ENCODE measurements at regions of chr6 and their contacts with region 1.

Region 1: DNA sequence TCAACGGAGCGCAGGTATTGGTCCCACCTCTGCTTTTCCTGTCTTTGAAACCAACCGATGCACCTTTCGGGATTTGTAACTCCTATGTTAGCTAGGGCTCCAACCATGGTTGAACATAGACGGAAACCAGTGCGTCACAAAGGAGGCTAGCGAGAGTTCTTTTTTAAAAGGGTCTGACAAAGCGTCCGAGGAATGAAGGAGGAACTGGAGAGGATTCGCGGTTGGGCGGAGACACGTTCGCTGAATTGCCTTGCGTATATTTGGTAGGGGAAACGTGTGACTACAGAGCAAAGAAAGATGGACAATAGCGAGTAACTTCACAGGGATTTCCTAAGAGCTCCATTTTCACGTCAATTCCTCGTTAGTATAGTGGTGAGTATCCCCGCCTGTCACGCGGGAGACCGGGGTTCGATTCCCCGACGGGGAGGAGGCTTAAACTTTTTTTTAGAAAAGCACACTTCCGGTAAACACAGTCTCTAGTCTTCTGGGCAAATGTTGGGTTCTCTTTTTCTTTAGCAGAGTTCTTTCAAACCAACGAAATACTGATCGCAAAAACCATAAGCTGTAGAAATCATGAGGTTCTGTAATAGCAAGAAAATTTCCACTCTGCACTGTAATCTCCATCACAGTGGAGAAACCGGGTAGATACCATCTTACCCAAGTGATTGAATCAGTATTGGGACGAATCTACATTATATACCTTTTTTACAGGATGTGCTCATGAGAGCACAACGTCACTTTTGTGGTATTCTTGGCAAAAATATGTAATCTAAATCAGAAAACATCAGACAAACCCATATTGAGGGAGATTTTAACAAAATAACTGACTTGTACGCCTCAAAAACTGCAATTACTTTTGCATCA is 6.6 kb upstream of the ZNF184 start:
- DNase-seq: peak; percentile 83 to 97 (median 87)
- ATAC-seq: peak; percentile 69
- H3K4me3 ChIP-seq: peak overlapping the region; percentile 79 to 96
- H3K4me3 Mint-ChIP-seq: no peak overlapping the region
- H3K27ac ChIP-seq: peak overlapping the region; percentile 96 to 99
- H3K27ac Mint-ChIP-seq: no peak overlapping the region
- H3K4me1 ChIP-seq: peaks cover 13% of the 10 kb centered on the region
- H3K4me1 Mint-ChIP-seq: peaks cover 9% of the 10 kb centered on the region
- H3K27me3 ChIP-seq: no peaks in the 10 kb centered on the region
- H3K27me3 Mint-ChIP-seq: no peaks in the 10 kb centered on the region
- CTCF ChIP-seq: no peak

Region 2: GRCh38 chr6:26329763-26330511 is 1149.6 kb before region 1 on chr6:
- CTCF ChIA-PET with region 1: no interaction called
- POLR2A ChIA-PET with region 1: no interaction called
- intact Hi-C with region 1: loop called in 1 of 2 experiments (anchors 5 kb)
- DNase-seq: peak in 7 of 9 experiments; percentile 35 to 81 (median 60)
- ATAC-seq: peak; percentile 27
- H3K4me3 ChIP-seq: no peak overlapping the region
- H3K4me3 Mint-ChIP-seq: peak overlapping the region; percentile 59
- H3K27ac ChIP-seq: no peak overlapping the region
- H3K27ac Mint-ChIP-seq: peak overlapping the region; percentile 85
- H3K4me1 ChIP-seq: peaks cover 18% of the 10 kb centered on the region
- H3K4me1 Mint-ChIP-seq: peaks cover 53% of the 10 kb centered on the region
- H3K27me3 ChIP-seq: peaks cover 8 to 11% of the 10 kb centered on the region in 2 experiments
- H3K27me3 Mint-ChIP-seq: peaks cover 27% of the 10 kb centered on the region
- CTCF ChIP-seq: no peak

Region 3: DNA sequence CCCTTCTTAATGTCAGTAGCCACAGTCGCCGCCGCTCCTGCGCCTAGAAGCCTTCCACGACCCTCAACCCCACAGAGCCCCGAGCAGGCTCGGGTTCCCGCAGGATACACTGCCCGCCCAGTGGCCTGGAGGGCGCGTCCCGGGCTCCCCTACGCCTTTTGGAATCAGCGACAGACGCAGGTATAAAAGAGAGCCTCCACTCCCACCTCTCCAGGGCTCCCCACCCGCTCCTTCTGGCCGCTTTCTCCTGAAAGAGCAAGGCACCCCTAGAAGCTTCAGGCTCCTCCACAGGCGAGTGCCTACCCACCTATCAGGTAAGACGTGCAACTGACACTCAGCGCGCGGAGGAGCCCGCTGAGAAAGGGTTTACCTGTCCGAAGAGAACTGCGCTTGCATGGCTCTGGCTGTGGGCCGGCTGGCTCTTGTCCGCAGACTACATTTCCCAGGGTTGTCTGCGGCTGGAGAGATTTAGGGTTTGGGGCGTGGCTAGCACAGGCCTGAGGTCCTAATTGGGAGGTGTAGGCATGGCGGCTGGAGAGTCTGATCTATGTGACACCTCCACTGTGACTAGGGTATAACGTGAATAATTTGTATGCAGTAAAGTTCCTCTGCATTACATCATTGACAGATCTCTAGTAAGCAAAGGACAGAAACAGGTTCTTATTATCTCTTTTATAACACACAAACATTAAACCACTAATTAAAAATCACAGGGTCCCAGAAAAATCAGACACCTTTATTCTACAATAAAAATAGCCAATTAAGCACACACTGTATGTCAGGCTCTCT is 104.5 kb before region 1 on chr6:
- CTCF ChIA-PET with region 1: no interaction called
- POLR2A ChIA-PET with region 1: interaction called, 4 read pairs
- intact Hi-C with region 1: loop called in 1 of 2 experiments (anchors 1 kb)
- DNase-seq: peak; percentile 43 to 85 (median 69)
- ATAC-seq: peak; percentile 98
- H3K4me3 ChIP-seq: peak overlapping the region; percentile 58 to 68
- H3K4me3 Mint-ChIP-seq: peak overlapping the region; percentile 96
- H3K27ac ChIP-seq: peak overlapping the region; percentile 13 to 48
- H3K27ac Mint-ChIP-seq: peak overlapping the region; percentile 92
- H3K4me1 ChIP-seq: peaks cover 12% of the 10 kb centered on the region
- H3K4me1 Mint-ChIP-seq: peaks cover 21% of the 10 kb centered on the region
- H3K27me3 ChIP-seq: no peaks in the 10 kb centered on the region
- H3K27me3 Mint-ChIP-seq: peaks cover 8% of the 10 kb centered on the region
- CTCF ChIP-seq: no peak

Region 4: GRCh38 chr6:27400877-27401642 is 78.5 kb before region 1 on chr6:
- CTCF ChIA-PET with region 1: no interaction called
- POLR2A ChIA-PET with region 1: no interaction called
- intact Hi-C with region 1: no loop called
- DNase-seq: no peak
- ATAC-seq: no peak
- H3K4me3 ChIP-seq: no peak overlapping the region
- H3K4me3 Mint-ChIP-seq: no peak overlapping the region
- H3K27ac ChIP-seq: no peak overlapping the region
- H3K27ac Mint-ChIP-seq: no peak overlapping the region
- H3K4me1 ChIP-seq: no peaks in the 10 kb centered on the region
- H3K4me1 Mint-ChIP-seq: no peaks in the 10 kb centered on the region
- H3K27me3 ChIP-seq: no peaks in the 10 kb centered on the region
- H3K27me3 Mint-ChIP-seq: no peaks in the 10 kb centered on the region
- CTCF ChIP-seq: no peak

Region 5: GRCh38 chr6:27518881-27519795 is 39.6 kb after region 1 on chr6:
- CTCF ChIA-PET with region 1: interaction called, 11 read pairs
- POLR2A ChIA-PET with region 1: interaction called, 11 read pairs
- intact Hi-C with region 1: loop called in 1 of 2 experiments (anchors 2 kb)
- DNase-seq: peak; percentile 29 to 88 (median 61)
- ATAC-seq: peak; percentile 78
- H3K4me3 ChIP-seq: peak overlapping the region; percentile 74 to 88
- H3K4me3 Mint-ChIP-seq: peak overlapping the region; percentile 83
- H3K27ac ChIP-seq: peak overlapping the region; percentile 59 to 72
- H3K27ac Mint-ChIP-seq: peak overlapping the region; percentile 83
- H3K4me1 ChIP-seq: peaks cover 10% of the 10 kb centered on the region
- H3K4me1 Mint-ChIP-seq: peaks cover 19% of the 10 kb centered on the region
- H3K27me3 ChIP-seq: peaks cover 0 to 9% of the 10 kb centered on the region in 2 experiments
- H3K27me3 Mint-ChIP-seq: peaks cover 18% of the 10 kb centered on the region
- CTCF ChIP-seq: peak; percentile 77

Region 6: DNA sequence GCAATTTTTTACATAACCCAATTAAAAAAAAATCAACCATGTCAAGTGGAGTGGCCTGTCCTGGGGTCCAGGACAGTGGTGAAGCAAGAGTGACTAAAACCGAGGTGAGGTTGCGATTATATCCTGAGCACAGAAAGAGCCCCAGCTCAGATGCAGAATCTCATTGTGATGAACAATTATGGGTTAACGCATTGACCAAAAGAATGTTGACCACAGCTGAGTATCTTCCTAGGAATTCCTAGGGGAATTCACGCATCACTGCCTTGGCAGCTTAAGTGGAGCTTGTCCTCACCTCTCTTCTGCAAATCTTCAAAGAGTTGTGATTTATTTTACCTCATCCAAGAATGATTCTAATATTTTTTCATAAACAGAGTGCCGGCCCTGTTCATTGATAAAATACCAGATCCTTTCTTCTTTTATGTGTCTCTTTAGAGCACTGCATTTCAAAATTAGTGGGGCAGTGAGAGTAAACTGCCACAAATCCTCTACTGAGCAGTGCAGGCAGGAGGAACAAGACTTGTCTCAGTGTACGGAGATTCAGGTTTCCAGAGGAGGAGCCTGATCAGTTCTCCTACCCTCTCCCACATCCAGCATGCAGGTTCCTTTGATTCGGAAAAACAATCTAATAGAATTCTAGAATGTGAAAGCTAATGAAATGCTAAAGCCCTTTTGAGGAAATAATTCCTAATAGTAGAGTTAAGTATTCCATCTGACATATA is 53.4 kb after region 1 on chr6:
- CTCF ChIA-PET with region 1: no interaction called
- POLR2A ChIA-PET with region 1: no interaction called
- intact Hi-C with region 1: no loop called
- DNase-seq: no peak
- ATAC-seq: no peak
- H3K4me3 ChIP-seq: no peak overlapping the region
- H3K4me3 Mint-ChIP-seq: no peak overlapping the region
- H3K27ac ChIP-seq: no peak overlapping the region
- H3K27ac Mint-ChIP-seq: no peak overlapping the region
- H3K4me1 ChIP-seq: no peaks in the 10 kb centered on the region
- H3K4me1 Mint-ChIP-seq: no peaks in the 10 kb centered on the region
- H3K27me3 ChIP-seq: peaks cover 0 to 6% of the 10 kb centered on the region in 2 experiments
- H3K27me3 Mint-ChIP-seq: peaks cover 67% of the 10 kb centered on the region
- CTCF ChIP-seq: no peak

Region 7: GRCh38 chr6:27545271-27546046 is 65.9 kb after region 1 on chr6:
- CTCF ChIA-PET with region 1: no interaction called
- POLR2A ChIA-PET with region 1: no interaction called
- intact Hi-C with region 1: no loop called
- DNase-seq: peak in 1 of 9 experiments; percentile 23
- ATAC-seq: no peak
- H3K4me3 ChIP-seq: no peak overlapping the region
- H3K4me3 Mint-ChIP-seq: no peak overlapping the region
- H3K27ac ChIP-seq: no peak overlapping the region
- H3K27ac Mint-ChIP-seq: no peak overlapping the region
- H3K4me1 ChIP-seq: no peaks in the 10 kb centered on the region
- H3K4me1 Mint-ChIP-seq: peaks cover 15% of the 10 kb centered on the region
- H3K27me3 ChIP-seq: peaks cover 34 to 52% of the 10 kb centered on the region in 2 experiments
- H3K27me3 Mint-ChIP-seq: peaks cover 88% of the 10 kb centered on the region
- CTCF ChIP-seq: no peak

Region 8: GRCh38 chr6:27864906-27865849 is 385.6 kb after region 1 on chr6:
- CTCF ChIA-PET with region 1: no interaction called
- POLR2A ChIA-PET with region 1: interaction called, 13 read pairs
- intact Hi-C with region 1: no loop called
- DNase-seq: peak; percentile 37 to 97 (median 56)
- ATAC-seq: peak; percentile 83
- H3K4me3 ChIP-seq: peak overlapping the region; percentile 71 to 79
- H3K4me3 Mint-ChIP-seq: peak overlapping the region; percentile 95
- H3K27ac ChIP-seq: peak overlapping the region; percentile 67 to 83
- H3K27ac Mint-ChIP-seq: peak overlapping the region; percentile 94
- H3K4me1 ChIP-seq: peaks cover 17% of the 10 kb centered on the region
- H3K4me1 Mint-ChIP-seq: peaks cover 38% of the 10 kb centered on the region
- H3K27me3 ChIP-seq: no peaks in the 10 kb centered on the region
- H3K27me3 Mint-ChIP-seq: no peaks in the 10 kb centered on the region
- CTCF ChIP-seq: no peak

Region 9: DNA sequence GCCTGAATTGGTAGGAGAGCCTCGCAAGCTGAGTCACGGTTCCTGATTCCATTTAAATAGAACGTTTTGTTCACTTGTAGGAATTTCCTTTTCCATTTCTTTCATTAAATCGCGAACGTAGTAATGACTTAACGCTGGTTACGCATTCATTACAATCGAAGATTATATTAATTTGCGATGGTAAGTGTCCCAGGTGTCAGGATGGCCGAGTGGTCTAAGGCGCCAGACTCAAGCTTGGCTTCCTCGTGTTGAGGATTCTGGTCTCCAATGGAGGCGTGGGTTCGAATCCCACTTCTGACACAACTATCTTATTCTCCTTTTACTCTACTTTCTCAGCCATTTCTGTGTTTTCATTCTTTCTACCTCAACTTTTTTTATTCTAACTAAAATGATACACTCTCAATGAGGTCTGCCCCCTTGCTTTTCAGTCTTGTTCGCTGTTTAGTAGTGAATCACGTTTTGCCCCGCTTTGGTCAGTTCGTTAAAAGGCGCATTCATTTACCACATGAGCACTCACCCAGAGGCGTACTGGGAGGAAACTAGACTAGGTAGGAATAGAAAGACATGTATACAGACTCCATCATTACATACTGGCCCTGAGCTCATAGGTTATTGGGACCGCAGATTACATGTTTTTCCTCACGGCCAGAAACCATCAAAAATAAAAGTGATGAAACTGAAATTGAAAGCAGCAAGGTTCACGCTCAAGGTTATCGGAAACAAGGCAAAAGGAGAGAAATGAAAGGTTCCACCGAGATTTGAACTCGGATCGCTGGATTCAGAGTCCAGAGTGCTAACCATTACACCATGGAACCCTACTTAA is 1461.5 kb after region 1 on chr6:
- CTCF ChIA-PET with region 1: no interaction called
- POLR2A ChIA-PET with region 1: no interaction called
- intact Hi-C with region 1: loop called in 1 of 2 experiments (anchors 5 kb)
- DNase-seq: peak in 8 of 9 experiments; percentile 58 to 92 (median 70)
- ATAC-seq: peak; percentile 70
- H3K4me3 ChIP-seq: peak overlapping the region; percentile 66 to 81
- H3K4me3 Mint-ChIP-seq: peak overlapping the region; percentile 91
- H3K27ac ChIP-seq: peak overlapping the region; percentile 70 to 79
- H3K27ac Mint-ChIP-seq: peak overlapping the region; percentile 96
- H3K4me1 ChIP-seq: peaks cover 40% of the 10 kb centered on the region
- H3K4me1 Mint-ChIP-seq: peaks cover 46% of the 10 kb centered on the region
- H3K27me3 ChIP-seq: no peaks in the 10 kb centered on the region
- H3K27me3 Mint-ChIP-seq: no peaks in the 10 kb centered on the region
- CTCF ChIP-seq: no peak